AG04450 (cell line): ENCODE measurements at regions of chr5 and their contacts with region 1.

Region 1: DNA sequence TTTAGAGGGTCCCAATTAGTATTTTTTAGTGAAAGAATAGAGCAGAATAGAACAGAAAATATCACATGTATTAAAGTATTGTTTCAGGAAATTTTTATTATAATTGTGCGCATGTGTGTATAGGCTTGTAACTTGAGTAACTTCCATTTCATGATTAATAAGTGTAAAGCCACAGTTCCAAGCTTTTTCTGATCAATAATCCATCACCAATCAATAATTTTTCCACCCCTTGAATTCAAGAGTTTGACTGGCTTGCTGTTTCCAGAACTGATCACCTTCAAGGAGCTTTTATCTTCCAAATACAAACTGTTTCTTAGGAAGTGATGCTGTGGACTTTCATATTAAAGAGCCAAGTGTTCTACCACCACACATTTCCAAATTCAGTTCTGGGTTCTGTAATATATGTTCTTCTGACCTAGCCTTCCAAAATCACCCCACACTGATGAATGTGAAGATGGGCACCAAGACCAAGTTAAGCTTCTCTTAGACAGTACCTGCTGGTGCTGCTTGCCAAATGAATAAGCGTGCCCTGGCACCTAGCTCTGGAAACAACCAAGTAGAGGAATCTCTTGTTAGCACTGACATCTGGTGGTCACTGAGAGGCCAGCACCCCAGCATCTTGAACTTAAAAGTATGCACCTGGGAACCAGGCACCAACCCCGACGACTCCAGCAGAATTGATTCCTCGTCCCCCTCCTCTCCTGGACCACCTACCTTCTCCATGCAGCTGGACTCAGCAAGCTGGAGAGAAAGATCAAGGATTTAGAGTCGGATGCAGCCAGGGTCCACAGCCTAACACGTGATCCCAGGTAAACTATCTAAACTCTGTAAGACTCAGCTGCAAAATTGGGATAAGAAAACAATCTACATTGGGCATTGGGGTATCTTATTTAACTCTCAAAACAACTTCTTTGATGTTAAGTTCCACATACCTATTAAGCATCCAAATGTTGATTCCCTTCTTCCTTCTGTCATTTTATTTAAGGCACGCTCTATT is 89.6 kb downstream of the SLC1A3 start:
- DNase-seq: peak; percentile 21
- H3K4me3 ChIP-seq: no peak overlapping the region
- H3K27ac ChIP-seq: no peak overlapping the region
- H3K27me3 ChIP-seq: peaks cover 7% of the 10 kb centered on the region
- CTCF ChIP-seq: peak; percentile 85

Region 2: GRCh38 chr5:36403632-36404311 is 292.2 kb before region 1 on chr5:
- CTCF ChIA-PET with region 1: interaction called, 16 read pairs
- POLR2A ChIA-PET with region 1: no interaction called
- DNase-seq: peak; percentile 11
- H3K4me3 ChIP-seq: no peak overlapping the region
- H3K27ac ChIP-seq: peak overlapping the region; percentile 31
- H3K27me3 ChIP-seq: no peaks in the 10 kb centered on the region
- CTCF ChIP-seq: no peak

Region 3: GRCh38 chr5:36657563-36657995 is 38.4 kb before region 1 on chr5:
- CTCF ChIA-PET with region 1: interaction called, 16 read pairs
- POLR2A ChIA-PET with region 1: no interaction called
- DNase-seq: peak; percentile 97
- H3K4me3 ChIP-seq: no peak overlapping the region
- H3K27ac ChIP-seq: peak overlapping the region; percentile 88
- H3K27me3 ChIP-seq: no peaks in the 10 kb centered on the region
- CTCF ChIP-seq: no peak